Cardiac septum (tissue), 1 donor: ENCODE measurements at regions of chr7 and their contacts with region 1.

Region 1: DNA sequence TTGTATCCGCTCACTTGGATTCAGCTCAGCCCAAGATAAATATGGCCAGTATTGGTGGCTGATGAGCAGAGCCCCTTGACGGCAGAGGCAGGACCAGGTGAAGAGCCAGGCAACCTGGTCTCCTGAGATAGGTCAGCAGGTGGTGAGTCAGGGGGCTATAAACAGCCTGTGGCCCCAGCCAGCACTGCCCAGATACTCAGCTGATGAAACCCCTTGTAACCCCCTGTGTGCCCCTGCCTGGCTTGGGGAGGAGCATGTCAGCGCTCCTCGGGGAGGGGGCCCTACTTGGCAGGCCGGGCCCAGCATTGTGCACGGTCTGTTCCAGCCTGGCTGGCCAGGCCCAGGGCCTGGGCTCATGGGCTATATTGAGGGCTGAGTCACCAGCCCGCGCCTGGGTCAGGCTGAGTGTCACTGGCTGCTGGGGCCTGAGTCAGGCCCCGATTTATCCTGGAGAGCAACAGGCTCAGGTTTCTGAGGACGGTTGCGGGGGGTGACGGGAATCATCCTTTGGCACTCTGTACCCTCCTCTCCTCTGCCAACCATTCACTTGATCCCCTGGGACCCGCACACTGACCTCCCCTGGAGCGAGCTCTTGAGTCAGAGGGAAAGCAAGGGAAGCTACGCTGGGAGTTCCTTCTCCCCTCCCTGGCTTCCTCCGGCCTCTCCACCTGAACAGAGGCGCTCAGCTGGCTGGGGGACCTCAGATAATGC is 2.8 kb upstream of the FLNC start:
- DNase-seq: peak; percentile 87

Region 2: GRCh38 chr7:128739048-128739962 is 88.1 kb before region 1 on chr7 and contains the start of gene CALU:
- intact Hi-C with region 1: loop called (anchors 2 kb)
- DNase-seq: peak; percentile 98
- total RNA-seq, gene CALU: 326 TPM

Region 3: DNA sequence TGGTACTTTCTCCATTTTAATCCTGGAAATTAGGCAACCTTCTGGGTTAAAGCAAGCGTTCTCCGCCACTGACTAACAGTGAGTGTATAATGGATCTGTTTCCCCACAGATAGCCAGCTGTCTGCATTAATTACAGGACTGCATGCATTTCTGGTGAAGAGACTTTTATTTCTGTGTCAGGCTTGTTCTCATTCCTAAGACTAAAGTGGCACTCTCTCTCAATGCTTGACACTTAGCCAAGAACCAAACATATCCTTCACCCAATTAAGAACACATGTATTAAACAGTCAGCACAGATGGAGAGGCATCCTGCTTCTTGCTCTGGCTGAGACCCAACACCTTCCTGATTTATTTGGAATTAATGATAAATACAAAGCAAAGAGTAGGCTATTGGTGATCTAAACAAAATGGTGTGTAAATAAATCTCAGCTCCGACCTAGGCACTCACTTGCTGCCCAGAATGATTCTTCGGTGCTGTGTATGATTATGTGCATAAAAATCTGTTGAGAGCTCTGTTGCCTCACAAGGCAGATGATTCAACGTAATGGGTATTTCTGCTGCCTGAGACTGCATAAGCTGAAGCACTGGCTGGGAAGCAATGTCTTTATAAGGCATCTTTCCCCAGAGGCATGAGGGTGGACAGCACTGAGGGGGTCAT is 71.5 kb before region 1 on chr7:
- intact Hi-C with region 1: loop called (anchors 5 kb)
- DNase-seq: no peak

Region 4: GRCh38 chr7:128791121-128791961 is 36.1 kb before region 1 on chr7:
- intact Hi-C with region 1: loop called (anchors 5 kb)
- DNase-seq: peak; percentile 80

Region 5: GRCh38 chr7:128933180-128933891 is 105.9 kb after region 1 on chr7:
- intact Hi-C with region 1: no loop called
- DNase-seq: no peak